Panc1 (cell line): ENCODE measurements at regions of chr2 and their contacts with region 1.

Region 1: GRCh38 chr2:88212251-88212790 is 42.2 kb downstream of the THNSL2 start:
- DNase-seq: no peak
- ATAC-seq: no peak
- H3K4me3 ChIP-seq: no peak overlapping the region
- H3K27ac ChIP-seq: no peak overlapping the region
- H3K4me1 ChIP-seq: no peaks in the 10 kb centered on the region
- H3K27me3 ChIP-seq: peaks cover 9% of the 10 kb centered on the region
- CTCF ChIP-seq: peak; percentile 55

Region 2: GRCh38 chr2:88307817-88308216 is 95.5 kb after region 1 on chr2:
- CTCF ChIA-PET with region 1: no interaction called
- POLR2A ChIA-PET with region 1: no interaction called
- in situ Hi-C with region 1: no loop called
- intact Hi-C with region 1: loop called (anchors 10 kb)
- DNase-seq: peak; percentile 10
- ATAC-seq: peak; percentile 53; the same call in 1 of the 2 replicates
- H3K4me3 ChIP-seq: no peak overlapping the region
- H3K27ac ChIP-seq: no peak overlapping the region
- H3K4me1 ChIP-seq: no peaks in the 10 kb centered on the region
- H3K27me3 ChIP-seq: no peaks in the 10 kb centered on the region
- CTCF ChIP-seq: peak; percentile 75

Region 3: DNA sequence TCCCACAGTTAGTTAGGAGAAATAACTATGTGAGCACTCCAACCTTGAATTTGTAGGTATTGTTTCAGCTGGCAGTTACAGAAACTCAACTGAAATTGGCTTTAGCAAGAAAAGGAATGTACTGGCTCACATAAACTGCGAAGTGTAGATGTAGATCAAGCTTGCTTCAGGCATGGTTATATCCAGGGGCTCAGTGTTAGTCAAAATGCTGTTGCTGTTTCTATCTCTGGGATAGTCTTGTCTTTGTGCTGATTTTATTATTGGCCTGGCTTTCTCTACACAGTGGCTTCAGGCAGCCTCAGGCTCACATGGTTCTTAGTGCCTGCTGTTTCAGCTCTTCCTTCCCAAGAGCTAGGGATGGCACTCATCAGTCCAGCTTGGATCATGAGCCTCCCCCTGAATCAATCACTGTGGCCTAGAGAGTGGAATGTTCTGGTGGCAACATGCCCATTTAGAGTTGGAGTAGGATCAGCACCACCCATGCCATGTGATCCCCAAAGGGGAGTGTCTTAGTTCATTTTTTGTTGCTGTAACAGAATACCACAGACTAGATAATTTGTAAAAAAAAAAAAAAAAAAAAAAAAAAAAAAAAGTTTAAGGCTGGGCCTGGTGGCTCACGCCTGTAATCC is 309.2 kb after region 1 on chr2:
- CTCF ChIA-PET with region 1: interaction called, 17 read pairs
- POLR2A ChIA-PET with region 1: no interaction called
- in situ Hi-C with region 1: no loop called
- intact Hi-C with region 1: no loop called
- DNase-seq: no peak
- ATAC-seq: no peak
- H3K4me3 ChIP-seq: no peak overlapping the region
- H3K27ac ChIP-seq: no peak overlapping the region
- H3K4me1 ChIP-seq: no peaks in the 10 kb centered on the region
- H3K27me3 ChIP-seq: no peaks in the 10 kb centered on the region
- CTCF ChIP-seq: no peak